ENCODE measurements at regions of chr7 and their contacts with region 1.

Region 1: GRCh38 chr7:39829028-39829427 is 121.0 kb upstream of the CDK13 start:
- DNase-seq: no peak
- ATAC-seq: no peak
- H3K4me3 ChIP-seq: no peak overlapping the region
- H3K27ac ChIP-seq: no peak overlapping the region
- H3K4me1 ChIP-seq: no peaks in the 10 kb centered on the region
- H3K27me3 ChIP-seq: peaks cover 66% of the 10 kb centered on the region
- CTCF ChIP-seq: no peak

Region 2: DNA sequence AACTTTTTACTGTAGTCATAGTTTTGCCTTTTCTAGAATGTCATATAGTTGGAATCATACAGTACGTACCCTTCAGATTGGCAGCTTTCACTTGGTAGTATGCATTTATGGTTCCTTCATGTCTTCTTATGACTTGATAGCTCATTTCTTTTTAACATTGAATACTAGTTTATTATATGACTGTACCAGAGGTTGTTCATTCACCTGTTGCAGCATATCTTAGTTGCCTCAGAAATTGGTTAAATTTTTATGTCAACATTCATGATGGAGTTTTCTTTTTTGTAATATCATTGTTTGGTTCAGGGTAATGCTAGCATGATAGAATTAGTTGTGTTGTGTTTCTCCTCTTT is 26.3 kb after region 1 on chr7:
- CTCF ChIA-PET with region 1: no interaction called
- POLR2A ChIA-PET with region 1: no interaction called
- intact Hi-C with region 1: no loop called
- DNase-seq: no peak
- ATAC-seq: no peak
- H3K4me3 ChIP-seq: no peak overlapping the region
- H3K27ac ChIP-seq: no peak overlapping the region
- H3K4me1 ChIP-seq: no peaks in the 10 kb centered on the region
- H3K27me3 ChIP-seq: no peaks in the 10 kb centered on the region
- CTCF ChIP-seq: no peak

Region 3: DNA sequence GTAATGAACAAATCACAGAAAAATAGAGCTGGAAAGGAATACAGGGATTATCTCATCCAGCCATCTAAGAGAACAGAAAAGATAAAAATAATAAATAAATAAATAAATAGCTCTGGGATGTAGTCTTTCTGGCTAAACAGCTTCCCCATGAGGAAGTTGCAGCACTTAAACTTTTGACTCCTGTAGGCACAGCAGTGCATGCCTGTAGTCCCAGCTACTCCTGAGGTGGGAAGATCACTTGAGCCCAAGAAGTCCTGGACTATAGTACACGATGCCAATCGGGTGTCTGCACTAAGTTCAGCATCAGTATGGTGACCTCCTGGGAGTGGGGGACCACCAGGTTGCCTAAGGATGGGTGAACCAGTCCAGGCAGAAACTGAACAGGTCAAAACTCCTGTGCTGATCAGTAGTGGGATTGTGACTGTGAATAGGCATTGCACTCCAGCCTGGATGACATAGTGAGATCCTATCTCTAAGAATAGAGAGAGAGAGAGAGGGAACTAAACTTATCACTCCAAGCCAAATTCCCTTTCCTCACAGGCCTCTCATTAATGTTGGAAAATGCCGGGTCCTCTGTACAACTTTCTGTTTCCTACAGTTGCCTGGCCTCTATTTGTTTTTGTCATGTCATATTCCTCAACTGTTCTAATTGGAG is 59.3 kb after region 1 on chr7:
- CTCF ChIA-PET with region 1: no interaction called
- POLR2A ChIA-PET with region 1: interaction called, 11 read pairs
- intact Hi-C with region 1: no loop called
- DNase-seq: no peak
- ATAC-seq: 0 out of 2 replicates have a peak, but pooled peaks have one; percentile 25
- H3K4me3 ChIP-seq: no peak overlapping the region
- H3K27ac ChIP-seq: no peak overlapping the region
- H3K4me1 ChIP-seq: peaks cover 20% of the 10 kb centered on the region
- H3K27me3 ChIP-seq: no peaks in the 10 kb centered on the region
- CTCF ChIP-seq: no peak

Region 4: DNA sequence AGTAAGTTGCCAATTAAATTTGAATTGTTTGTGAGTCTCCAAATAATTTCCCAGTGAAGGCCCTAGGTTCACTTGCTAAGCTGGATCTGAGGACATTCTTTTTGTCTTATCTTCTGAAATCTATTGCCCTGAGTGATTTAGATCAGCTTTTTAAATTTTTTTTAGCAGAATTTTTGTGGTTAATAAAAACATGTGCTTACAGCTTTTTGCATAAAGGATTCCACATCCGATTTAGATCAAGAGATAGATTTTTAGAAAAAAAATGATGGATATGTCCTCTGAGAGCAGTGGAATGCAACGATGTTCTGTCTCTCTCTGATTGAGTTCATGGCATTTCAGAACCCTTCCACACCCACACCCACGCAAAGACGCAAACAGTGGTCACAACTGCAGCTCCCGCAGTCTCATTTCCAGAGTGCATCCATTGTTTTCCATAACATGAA is 664.6 kb after region 1 on chr7:
- CTCF ChIA-PET with region 1: no interaction called
- POLR2A ChIA-PET with region 1: no interaction called
- intact Hi-C with region 1: no loop called
- DNase-seq: no peak
- ATAC-seq: no peak
- H3K4me3 ChIP-seq: no peak overlapping the region
- H3K27ac ChIP-seq: no peak overlapping the region
- H3K4me1 ChIP-seq: no peaks in the 10 kb centered on the region
- H3K27me3 ChIP-seq: no peaks in the 10 kb centered on the region
- CTCF ChIP-seq: no peak

Measured in PC-3 (cell line).